H1 (cell line): ENCODE measurements at regions of chr1 and their contacts with region 1.

Region 1: DNA sequence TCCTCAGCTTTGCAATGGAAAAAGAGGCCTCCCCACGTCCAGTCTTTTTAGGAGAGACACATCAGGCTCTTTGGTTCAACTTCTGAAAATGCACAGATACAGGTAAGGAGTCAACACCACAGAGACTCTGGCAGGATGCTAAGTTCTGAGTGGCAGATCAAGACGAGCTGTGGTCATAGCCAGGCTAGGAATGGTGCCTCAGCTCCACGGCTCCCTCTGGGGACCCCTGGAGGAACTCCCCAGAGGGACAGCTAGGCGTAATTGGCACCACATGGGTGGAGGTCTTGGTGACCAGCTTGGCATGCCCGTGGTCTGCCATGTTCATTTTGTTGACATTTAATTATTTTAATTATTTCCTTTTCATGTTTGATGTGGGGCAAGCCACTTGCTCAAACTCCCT is 206.1 kb downstream of the KAZN start:
- DNase-seq: peak; percentile 19 to 64
- H3K4me3 ChIP-seq: no peak overlapping the region
- H3K27ac ChIP-seq: no peak overlapping the region
- H3K4me1 ChIP-seq: no peaks in the 10 kb centered on the region
- H3K27me3 ChIP-seq: no peaks in the 10 kb centered on the region
- CTCF ChIP-seq: peak; percentile 70 to 82 (median 80)
- EP300 ChIP-seq: no peak
- POLR2A ChIP-seq: no peak
- RAD21 ChIP-seq: peak; percentile 72 to 81

Region 2: DNA sequence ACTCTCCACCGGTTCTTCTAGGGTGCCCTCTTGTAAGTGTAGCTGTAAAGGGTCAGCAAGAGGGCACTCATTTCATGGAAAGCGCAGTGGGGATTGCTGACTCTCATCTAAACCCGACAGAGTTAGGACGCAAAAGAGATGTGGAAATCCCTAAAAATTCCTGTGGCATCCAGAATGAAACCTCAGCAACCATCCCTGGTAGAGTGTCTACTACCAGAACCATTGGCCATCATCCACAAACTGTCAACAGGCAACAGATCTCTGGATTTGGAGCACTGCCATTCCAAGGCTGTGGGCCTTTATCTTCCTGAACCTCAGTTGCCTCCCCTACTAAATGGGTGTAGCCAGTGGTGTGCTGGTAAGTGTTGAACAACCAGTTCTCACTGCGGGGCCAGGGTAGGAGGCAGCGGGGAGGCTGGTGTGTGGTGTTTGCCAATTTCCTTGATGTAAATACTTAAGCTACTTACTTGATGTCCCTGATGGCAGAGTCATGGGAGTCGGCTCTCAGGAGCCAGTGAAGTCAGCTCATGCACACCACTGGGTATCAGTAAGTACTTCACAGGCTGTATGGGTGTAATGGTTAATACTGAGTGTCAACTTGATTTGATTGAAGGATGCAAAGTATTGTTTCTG is 10.4 kb before region 1 on chr1:
- CTCF ChIA-PET with region 1: interaction called, 11 read pairs
- POLR2A ChIA-PET with region 1: interaction called, 4 read pairs
- DNase-seq: no peak
- H3K4me3 ChIP-seq: no peak overlapping the region
- H3K27ac ChIP-seq: no peak overlapping the region
- H3K4me1 ChIP-seq: peaks cover 0 to under 1% (median 0%) of the 10 kb centered on the region in 4 experiments; a peak in 1 of 7 replicates
- H3K27me3 ChIP-seq: no peaks in the 10 kb centered on the region
- CTCF ChIP-seq: no peak
- EP300 ChIP-seq: no peak
- POLR2A ChIP-seq: no peak
- RAD21 ChIP-seq: no peak

Region 3: DNA sequence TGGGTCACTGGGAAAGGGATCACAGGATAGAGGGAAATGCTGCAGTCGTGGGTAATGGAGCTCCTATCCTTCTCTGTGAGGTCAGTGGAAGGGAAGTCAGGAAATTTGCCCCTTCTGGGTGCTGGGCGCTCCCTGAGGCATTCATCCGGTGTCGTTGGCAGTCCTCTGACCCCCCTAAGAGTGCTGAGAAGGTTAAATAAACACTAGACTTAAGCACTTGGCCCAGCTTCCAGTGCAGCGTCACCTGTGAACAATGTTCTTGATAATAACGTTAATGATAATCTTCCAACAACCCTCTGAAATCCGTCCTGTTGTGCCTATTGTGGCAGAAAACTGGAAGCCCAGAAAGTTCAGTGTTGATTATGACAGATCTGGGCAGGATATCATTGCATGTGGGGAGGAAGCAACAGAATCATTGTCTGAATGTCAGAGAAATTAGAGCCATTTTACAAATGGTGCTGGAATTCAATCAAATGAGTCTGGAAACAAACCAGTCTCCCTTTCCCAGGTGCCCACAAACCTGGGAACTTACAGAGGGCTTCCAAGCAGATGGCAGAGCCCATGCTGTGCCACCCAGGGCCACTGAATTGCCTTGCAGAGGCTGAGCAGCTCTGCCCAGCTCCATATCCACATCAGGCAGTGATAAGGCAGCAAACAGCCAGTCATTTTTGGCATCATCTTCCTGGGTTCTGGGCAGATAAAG is 10.7 kb after region 1 on chr1:
- CTCF ChIA-PET with region 1: interaction called, 12 read pairs
- POLR2A ChIA-PET with region 1: interaction called, 3 read pairs
- DNase-seq: no peak
- H3K4me3 ChIP-seq: no peak overlapping the region
- H3K27ac ChIP-seq: no peak overlapping the region
- H3K4me1 ChIP-seq: peaks cover 0 to 3% (median 0%) of the 10 kb centered on the region in 4 experiments; a peak in 1 of 7 replicates
- H3K27me3 ChIP-seq: no peaks in the 10 kb centered on the region; a peak in 1 of 7 replicates
- CTCF ChIP-seq: no peak
- EP300 ChIP-seq: no peak
- POLR2A ChIP-seq: no peak
- RAD21 ChIP-seq: no peak

Region 4: GRCh38 chr1:14881775-14882672 is 77.4 kb after region 1 on chr1:
- CTCF ChIA-PET with region 1: no interaction called
- POLR2A ChIA-PET with region 1: no interaction called
- DNase-seq: no peak
- H3K4me3 ChIP-seq: no peak overlapping the region
- H3K27ac ChIP-seq: no peak overlapping the region
- H3K4me1 ChIP-seq: peaks cover 0 to 3% (median 0%) of the 10 kb centered on the region in 4 experiments; a peak in 2 of 7 replicates
- H3K27me3 ChIP-seq: no peaks in the 10 kb centered on the region
- CTCF ChIP-seq: no peak
- EP300 ChIP-seq: no peak
- POLR2A ChIP-seq: no peak
- RAD21 ChIP-seq: no peak